Transverse colon (tissue), 4 donors: ENCODE measurements at regions of chr1 and their contacts with region 1.

Region 1: DNA sequence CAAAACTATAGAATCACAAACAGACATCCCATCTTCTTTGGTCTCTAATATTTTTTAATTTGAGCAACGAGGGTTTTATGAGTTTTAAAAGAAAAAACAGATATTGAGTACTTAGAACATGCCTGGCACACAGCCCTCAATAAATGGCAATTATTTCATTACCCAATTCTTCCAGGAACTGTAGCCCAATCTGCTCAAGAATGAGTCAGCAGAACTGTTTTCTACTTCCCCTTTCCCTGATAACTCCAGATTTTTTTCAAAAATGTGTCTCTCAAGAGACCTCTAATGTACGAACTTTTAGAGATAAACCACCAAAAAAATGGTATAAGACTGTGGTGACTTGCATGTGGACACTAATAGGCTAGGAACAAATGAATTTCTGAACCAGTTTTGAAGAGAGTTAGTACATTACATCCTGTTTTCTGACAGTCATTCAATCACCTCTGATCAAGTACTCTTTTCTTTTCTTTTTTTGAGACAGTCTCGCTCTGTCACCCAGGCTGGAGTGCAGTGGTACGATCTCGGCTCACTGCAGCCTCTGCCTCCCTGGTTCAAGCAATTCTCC is 11.5 kb downstream of the ABL2 start:
- DNase-seq: no peak
- H3K4me3 ChIP-seq: no peak overlapping the region
- H3K27ac ChIP-seq: peak overlapping the region; percentile 22 to 59 (median 48)
- H3K4me1 ChIP-seq: peaks cover 0 to 4% (median 2%) of the 10 kb centered on the region in 4 donors
- H3K27me3 ChIP-seq: no peaks in the 10 kb centered on the region
- CTCF ChIP-seq: no peak
- EP300 ChIP-seq: no peak
- POLR2A ChIP-seq: no peak

Region 2: GRCh38 chr1:178209935-178210334 is 1008.1 kb before region 1 on chr1:
- in situ Hi-C with region 1: no loop called
- intact Hi-C with region 1: no loop called
- DNase-seq: no peak
- H3K4me3 ChIP-seq: no peak overlapping the region
- H3K27ac ChIP-seq: no peak overlapping the region
- H3K4me1 ChIP-seq: no peaks in the 10 kb centered on the region
- H3K27me3 ChIP-seq: no peaks in the 10 kb centered on the region
- CTCF ChIP-seq: no peak
- EP300 ChIP-seq: no peak
- POLR2A ChIP-seq: no peak

Region 3: GRCh38 chr1:179121159-179121938 is 96.7 kb before region 1 on chr1:
- in situ Hi-C with region 1: loop called in 1 of 4 experiments (anchors 5 kb)
- intact Hi-C with region 1: no loop called
- DNase-seq: peak; percentile 35
- H3K4me3 ChIP-seq: no peak overlapping the region
- H3K27ac ChIP-seq: peak overlapping the region in 1 of 4 donors; percentile 7
- H3K4me1 ChIP-seq: peaks cover 0 to 13% (median 8%) of the 10 kb centered on the region in 4 donors
- H3K27me3 ChIP-seq: no peaks in the 10 kb centered on the region
- CTCF ChIP-seq: peak; percentile 50 to 61 (median 56)
- EP300 ChIP-seq: no peak
- POLR2A ChIP-seq: no peak

Region 4: DNA sequence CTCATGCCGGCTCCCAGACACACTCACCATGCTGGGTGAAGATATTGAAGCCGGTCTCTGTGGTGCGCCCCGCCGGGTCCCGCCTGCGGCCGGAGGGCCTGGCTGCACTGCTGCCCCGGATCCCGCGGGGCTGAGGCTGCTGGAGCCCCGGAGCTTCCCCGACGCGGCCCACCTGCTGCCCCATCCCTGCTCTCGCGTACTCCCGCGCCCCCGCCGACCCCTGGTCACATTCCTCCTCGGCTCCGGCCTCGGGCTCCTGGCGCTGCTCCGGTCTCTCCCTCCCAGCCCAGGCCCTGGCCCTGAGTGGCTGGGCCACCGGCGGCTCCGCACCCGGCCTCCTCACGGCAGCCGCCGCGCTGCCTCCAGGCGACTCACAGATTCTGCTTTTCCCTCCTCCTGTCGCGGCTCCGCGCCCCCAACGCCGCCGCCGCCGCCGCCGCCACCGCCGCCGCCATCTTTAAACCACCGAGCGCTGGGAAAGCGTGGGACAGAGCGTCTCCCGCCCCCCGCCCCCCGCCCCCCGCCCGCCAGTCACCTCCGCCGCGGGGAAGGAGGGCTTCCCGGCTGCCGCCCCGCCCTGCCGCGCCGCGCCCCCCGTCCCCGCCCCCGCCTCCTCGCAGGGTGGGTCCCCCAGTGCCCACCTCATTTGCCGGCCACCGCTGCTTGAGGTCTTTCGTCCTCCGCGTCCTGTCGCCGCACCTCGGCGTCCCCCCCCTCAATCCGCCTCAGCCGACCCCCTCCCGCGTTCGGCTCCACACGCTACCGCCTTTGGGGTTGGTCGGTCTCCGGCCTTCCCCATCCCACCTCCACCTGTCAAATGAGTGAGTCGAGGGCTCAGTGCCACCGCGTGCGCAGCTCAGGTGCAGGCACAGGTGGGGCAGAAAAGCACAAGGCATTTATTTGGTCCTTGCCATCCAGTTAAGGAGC is 11.5 kb after region 1 on chr1 and contains the start of gene ABL2:
- in situ Hi-C with region 1: no loop called
- intact Hi-C with region 1: no loop called
- DNase-seq: peak; percentile 47
- H3K4me3 ChIP-seq: peak within 1 kb of the TSS; percentile 58 to 99 (median 79)
- H3K27ac ChIP-seq: peak within 1 kb of the TSS; percentile 79 to 95 (median 86)
- H3K4me1 ChIP-seq: peaks cover 6 to 43% (median 17%) of the 10 kb centered on the region in 4 donors
- H3K27me3 ChIP-seq: no peaks in the 10 kb centered on the region
- CTCF ChIP-seq: no peak
- EP300 ChIP-seq: no peak
- POLR2A ChIP-seq: no peak
- total RNA-seq, gene ABL2: 9.6 to 51.7 (median 14.3) TPM